GM12878 (cell line): ENCODE measurements at regions of chr5 and their contacts with region 1.

Region 1: GRCh38 chr5:6480133-6481051 is 31.7 kb downstream of the UBE2QL1 start:
- DNase-seq: peak; percentile 67
- ATAC-seq: peak; percentile 72
- H3K4me3 ChIP-seq: no peak overlapping the region
- H3K27ac ChIP-seq: peak overlapping the region; percentile 22; the same call in 1 of the 2 replicates
- H3K4me1 ChIP-seq: peaks cover 54% of the 10 kb centered on the region
- H3K27me3 ChIP-seq: no peaks in the 10 kb centered on the region
- CTCF ChIP-seq: peak; percentile 12 to 38 (median 17); a peak in 3 of 6 replicates
- EP300 ChIP-seq: peak; percentile 28 to 58; a peak in 1 of 4 replicates
- POLR2A ChIP-seq: no peak
- RAD21 ChIP-seq: peak; percentile 44

Region 2: DNA sequence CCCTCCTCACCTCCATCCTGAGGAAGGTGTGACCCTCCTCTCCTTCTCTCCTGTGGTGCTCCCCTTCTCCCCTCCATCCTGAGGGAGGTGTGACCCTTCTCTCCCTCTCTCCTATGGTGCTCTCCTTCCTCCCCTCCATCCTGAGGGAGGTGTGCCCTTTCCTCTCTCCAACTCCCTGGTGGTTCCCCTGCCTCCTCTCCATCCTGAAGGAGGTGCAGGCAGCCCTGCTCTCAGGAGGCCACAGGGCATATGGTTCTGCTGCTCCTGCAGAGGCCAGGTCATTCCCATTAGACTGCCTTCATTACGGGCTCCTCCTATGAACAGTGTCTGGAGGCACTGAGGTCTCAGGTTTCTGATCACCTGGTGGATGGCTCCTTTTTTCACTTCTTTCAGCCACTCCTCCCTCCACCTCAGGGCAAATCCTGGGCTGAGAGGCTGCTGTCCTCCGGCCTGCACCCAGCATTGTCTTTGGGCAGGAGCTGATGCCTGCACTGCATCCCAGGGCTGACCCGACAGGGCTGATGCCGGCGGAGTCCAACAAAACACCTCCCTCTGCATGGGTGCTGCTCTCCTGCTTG is 299.2 kb before region 1 on chr5:
- CTCF ChIA-PET with region 1: no interaction called
- POLR2A ChIA-PET with region 1: no interaction called
- RAD21 ChIA-PET with region 1: no interaction called
- SMC1A ChIA-PET with region 1: no interaction called
- in situ Hi-C with region 1: no loop called
- intact Hi-C with region 1: no loop called
- DNase-seq: no peak
- ATAC-seq: no peak
- H3K4me3 ChIP-seq: no peak overlapping the region
- H3K27ac ChIP-seq: no peak overlapping the region
- H3K4me1 ChIP-seq: no peaks in the 10 kb centered on the region
- H3K27me3 ChIP-seq: no peaks in the 10 kb centered on the region
- CTCF ChIP-seq: no peak
- EP300 ChIP-seq: no peak
- POLR2A ChIP-seq: no peak
- RAD21 ChIP-seq: no peak

Region 3: GRCh38 chr5:6342689-6343315 is 137.6 kb before region 1 on chr5:
- CTCF ChIA-PET with region 1: no interaction called
- POLR2A ChIA-PET with region 1: no interaction called
- RAD21 ChIA-PET with region 1: no interaction called
- SMC1A ChIA-PET with region 1: no interaction called
- in situ Hi-C with region 1: no loop called
- intact Hi-C with region 1: no loop called
- DNase-seq: no peak
- ATAC-seq: no peak
- H3K4me3 ChIP-seq: no peak overlapping the region
- H3K27ac ChIP-seq: no peak overlapping the region
- H3K4me1 ChIP-seq: no peaks in the 10 kb centered on the region
- H3K27me3 ChIP-seq: no peaks in the 10 kb centered on the region
- CTCF ChIP-seq: no peak
- EP300 ChIP-seq: no peak
- POLR2A ChIP-seq: no peak
- RAD21 ChIP-seq: no peak

Region 4: DNA sequence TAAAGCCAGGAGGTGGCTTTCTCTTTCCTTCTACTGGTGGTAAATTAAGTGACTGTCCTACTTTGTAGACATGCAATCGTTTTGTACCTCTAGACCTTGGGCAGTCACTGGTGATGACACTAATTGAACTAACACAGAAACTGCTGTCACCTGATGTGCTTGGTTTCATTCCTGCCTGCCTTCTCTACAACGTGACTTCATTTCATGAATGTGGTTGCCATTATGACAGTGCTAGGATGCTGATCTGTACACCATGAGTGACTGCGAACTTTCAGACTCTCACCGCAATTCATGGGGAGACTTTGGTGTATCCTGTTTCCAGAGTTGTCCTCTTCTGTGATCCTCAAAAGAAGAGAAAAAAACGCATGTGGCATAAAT is 15.8 kb after region 1 on chr5:
- CTCF ChIA-PET with region 1: interaction called, 7 read pairs
- POLR2A ChIA-PET with region 1: interaction called, 14 read pairs
- RAD21 ChIA-PET with region 1: interaction called, 35 read pairs
- SMC1A ChIA-PET with region 1: interaction called, 37 read pairs
- in situ Hi-C with region 1: no loop called
- intact Hi-C with region 1: loop called (anchors 1 kb)
- DNase-seq: peak; percentile 97
- ATAC-seq: peak; percentile 86
- H3K4me3 ChIP-seq: no peak overlapping the region
- H3K27ac ChIP-seq: peak overlapping the region; percentile 21; the same call in 1 of the 2 replicates
- H3K4me1 ChIP-seq: peaks cover 38% of the 10 kb centered on the region
- H3K27me3 ChIP-seq: no peaks in the 10 kb centered on the region
- CTCF ChIP-seq: no peak
- EP300 ChIP-seq: peak; percentile 97 to 99
- POLR2A ChIP-seq: no peak
- RAD21 ChIP-seq: no peak

Region 5: GRCh38 chr5:6518298-6519057 is 38.1 kb after region 1 on chr5:
- CTCF ChIA-PET with region 1: no interaction called
- POLR2A ChIA-PET with region 1: no interaction called
- RAD21 ChIA-PET with region 1: interaction called, 3 read pairs
- SMC1A ChIA-PET with region 1: interaction called, 9 read pairs
- in situ Hi-C with region 1: no loop called
- intact Hi-C with region 1: loop called (anchors 5 kb)
- DNase-seq: no peak
- ATAC-seq: no peak
- H3K4me3 ChIP-seq: no peak overlapping the region
- H3K27ac ChIP-seq: no peak overlapping the region
- H3K4me1 ChIP-seq: no peaks in the 10 kb centered on the region
- H3K27me3 ChIP-seq: peaks cover 0 to 4% of the 10 kb centered on the region in 2 experiments; a peak in 2 of 4 replicates
- CTCF ChIP-seq: no peak
- EP300 ChIP-seq: no peak
- POLR2A ChIP-seq: no peak
- RAD21 ChIP-seq: peak; percentile 33

Region 6: DNA sequence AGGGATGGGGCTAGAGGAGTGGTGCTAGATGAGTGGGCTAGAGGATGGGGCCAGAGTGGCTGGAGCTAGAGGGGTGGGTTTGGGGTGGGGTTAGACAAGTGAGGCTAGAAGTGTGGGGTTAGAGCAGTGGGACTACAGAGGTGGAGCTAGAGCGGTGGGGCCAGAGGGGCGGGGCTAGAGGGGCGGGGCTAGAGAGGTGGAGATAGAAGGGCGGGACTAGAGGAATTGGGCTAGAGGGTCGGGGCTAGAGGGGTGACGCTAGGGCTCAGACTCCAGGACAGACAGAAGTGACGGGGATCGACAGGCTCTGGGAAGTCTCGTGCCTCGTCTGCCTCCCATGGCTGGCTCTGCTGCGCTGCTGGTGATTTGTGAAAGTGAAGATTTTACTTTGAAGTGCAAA is 201.8 kb after region 1 on chr5:
- CTCF ChIA-PET with region 1: no interaction called
- POLR2A ChIA-PET with region 1: no interaction called
- RAD21 ChIA-PET with region 1: no interaction called
- SMC1A ChIA-PET with region 1: no interaction called
- in situ Hi-C with region 1: no loop called
- intact Hi-C with region 1: no loop called
- DNase-seq: no peak
- ATAC-seq: no peak
- H3K4me3 ChIP-seq: no peak overlapping the region
- H3K27ac ChIP-seq: no peak overlapping the region
- H3K4me1 ChIP-seq: no peaks in the 10 kb centered on the region
- H3K27me3 ChIP-seq: peaks cover 0 to 2% of the 10 kb centered on the region in 2 experiments; a peak in 1 of 4 replicates
- CTCF ChIP-seq: no peak
- EP300 ChIP-seq: no peak
- POLR2A ChIP-seq: no peak
- RAD21 ChIP-seq: no peak